Heart left ventricle (tissue), 16 donors: ENCODE measurements at regions of chr4 and their contacts with region 1.

Region 1: DNA sequence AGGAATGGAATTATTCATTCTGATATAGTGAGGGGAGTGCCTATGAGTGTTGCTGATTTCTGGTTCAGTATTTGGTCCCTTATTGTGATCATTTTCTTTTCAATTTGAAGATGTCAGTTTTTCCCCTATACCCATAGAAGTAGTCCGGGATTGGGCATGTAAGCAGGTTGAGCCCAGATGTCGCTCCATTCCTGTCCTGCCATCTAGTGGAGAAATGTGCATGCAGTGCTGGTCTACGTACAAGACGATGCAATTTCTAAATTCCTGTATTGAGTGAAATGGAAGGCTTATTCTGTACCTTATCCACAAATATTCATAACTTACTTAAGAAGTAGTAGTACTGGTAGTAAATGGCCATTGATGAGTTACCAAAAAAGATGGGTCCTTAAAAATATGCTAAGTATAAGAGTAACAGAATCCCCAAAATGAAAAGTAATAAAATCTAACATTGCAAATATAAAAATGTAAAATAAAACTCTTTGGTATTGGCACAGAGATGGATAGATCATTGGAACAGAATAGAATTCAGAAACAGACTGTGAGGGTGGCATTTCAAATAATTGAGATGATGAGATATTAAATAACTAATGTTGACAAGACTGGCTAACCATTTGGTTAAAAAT is 60.9 kb downstream of the UGT8 start:
- DNase-seq: peak in 4 of 5 donors; percentile 7 to 33 (median 29)
- ATAC-seq: peak in 3 of 4 donors; percentile 72 to 86 (median 84)
- H3K4me3 ChIP-seq: no peak overlapping the region
- H3K27ac ChIP-seq: no peak overlapping the region
- H3K4me1 ChIP-seq: no peaks in the 10 kb centered on the region
- H3K27me3 ChIP-seq: peaks cover 0 to 6% (median 0%) of the 10 kb centered on the region in 9 donors
- CTCF ChIP-seq: peak; percentile 55 to 76 (median 64)
- POLR2A ChIP-seq: no peak

Region 2: GRCh38 chr4:114399105-114399504 is 260.4 kb before region 1 on chr4:
- intact Hi-C with region 1: loop called in 1 of 10 experiments (anchors 10 kb)
- DNase-seq: no peak
- ATAC-seq: no peak
- H3K4me3 ChIP-seq: no peak overlapping the region
- H3K27ac ChIP-seq: no peak overlapping the region
- H3K4me1 ChIP-seq: no peaks in the 10 kb centered on the region
- H3K27me3 ChIP-seq: peaks cover 0 to 5% (median 0%) of the 10 kb centered on the region in 9 donors
- CTCF ChIP-seq: no peak
- POLR2A ChIP-seq: no peak